ENCODE measurements at regions of chr10 and their contacts with region 1.

Region 1: DNA sequence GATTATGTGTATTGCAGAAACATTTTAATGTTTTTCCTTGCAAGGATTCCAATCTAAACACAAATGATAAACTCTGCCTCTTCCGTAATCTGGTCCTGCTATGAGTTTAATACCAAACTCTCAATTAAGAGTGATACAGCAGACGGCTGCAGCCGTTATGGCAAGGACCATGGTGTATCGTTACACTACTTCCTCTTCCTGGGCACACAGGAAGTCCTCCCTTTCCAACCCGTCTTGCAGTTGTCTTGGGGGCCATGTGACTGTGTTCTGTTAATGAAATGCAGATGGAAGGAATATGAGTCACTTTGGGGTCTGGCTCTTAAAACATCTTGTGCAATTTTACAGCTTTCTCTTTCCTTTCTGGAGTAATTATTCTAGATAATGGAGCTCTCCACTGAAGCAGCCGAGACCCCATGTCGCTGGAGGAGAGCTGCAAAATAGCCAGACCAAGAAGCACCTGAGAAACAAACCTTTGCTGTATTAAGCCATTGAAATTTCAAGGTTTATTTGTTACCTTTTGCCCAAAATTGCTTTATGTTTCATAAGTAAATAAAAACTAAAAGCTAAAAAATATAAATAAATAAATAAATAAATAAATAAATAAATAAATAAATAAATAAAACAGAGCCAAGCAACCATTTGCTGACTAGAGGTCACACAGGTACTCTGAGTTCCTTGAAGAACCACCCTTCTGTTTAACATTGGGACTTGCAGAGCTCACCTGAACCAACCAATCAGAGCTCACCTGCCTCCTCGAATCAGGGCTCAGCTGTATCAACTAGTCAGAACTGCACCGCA is 74.7 kb downstream of the FRMPD2 start:
- DNase-seq: no peak
- ATAC-seq: peak in 1 of 8 donors; percentile 72
- H3K4me3 ChIP-seq: no peak overlapping the region
- H3K27ac ChIP-seq: no peak overlapping the region
- H3K4me1 ChIP-seq: peaks cover 0 to 4% (median 0%) of the 10 kb centered on the region in 9 donors
- H3K27me3 ChIP-seq: peaks cover 0 to 16% (median 0%) of the 10 kb centered on the region in 7 donors
- CTCF ChIP-seq: no peak

Region 2: DNA sequence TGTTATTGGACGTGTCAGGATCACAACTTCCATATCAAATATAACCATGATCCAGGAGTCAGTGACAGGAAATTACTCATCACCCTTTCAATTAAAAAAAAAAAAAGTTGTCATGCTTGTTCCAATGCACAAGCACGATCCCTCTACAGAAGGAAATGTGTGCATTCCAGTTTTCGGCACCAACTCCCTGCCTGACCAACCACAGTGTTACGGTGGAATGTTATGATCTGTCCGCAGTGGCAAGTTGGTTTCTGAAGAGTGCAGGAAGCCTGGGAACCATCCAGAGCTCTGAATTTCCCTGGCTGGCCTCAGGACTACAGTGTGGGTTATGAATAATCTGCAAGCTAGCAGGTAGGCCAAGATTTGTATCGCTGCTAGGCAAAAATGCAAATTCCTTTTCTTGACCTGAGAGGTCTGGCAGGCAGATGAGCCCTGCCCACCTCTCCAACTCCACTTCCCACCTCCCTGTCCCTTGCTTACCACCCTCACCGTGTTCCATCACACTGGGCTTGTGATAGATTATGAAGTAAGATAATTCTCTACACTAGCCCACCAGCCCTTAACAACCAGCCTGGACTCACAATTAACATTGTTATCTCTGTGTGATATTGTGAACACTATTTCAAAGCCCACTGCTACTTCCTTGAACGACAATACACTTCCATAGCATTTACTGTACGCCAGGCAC is 54.3 kb after region 1 on chr10:
- intact Hi-C with region 1: loop called in 1 of 10 experiments (anchors 10 kb)
- DNase-seq: no peak
- ATAC-seq: peak in 5 of 8 donors; percentile 17 to 79 (median 44)
- H3K4me3 ChIP-seq: no peak overlapping the region
- H3K27ac ChIP-seq: peak overlapping the region in 1 of 10 donors; percentile 1
- H3K4me1 ChIP-seq: peaks cover 0 to 18% (median 9%) of the 10 kb centered on the region in 9 donors
- H3K27me3 ChIP-seq: no peaks in the 10 kb centered on the region
- CTCF ChIP-seq: no peak

Region 3: DNA sequence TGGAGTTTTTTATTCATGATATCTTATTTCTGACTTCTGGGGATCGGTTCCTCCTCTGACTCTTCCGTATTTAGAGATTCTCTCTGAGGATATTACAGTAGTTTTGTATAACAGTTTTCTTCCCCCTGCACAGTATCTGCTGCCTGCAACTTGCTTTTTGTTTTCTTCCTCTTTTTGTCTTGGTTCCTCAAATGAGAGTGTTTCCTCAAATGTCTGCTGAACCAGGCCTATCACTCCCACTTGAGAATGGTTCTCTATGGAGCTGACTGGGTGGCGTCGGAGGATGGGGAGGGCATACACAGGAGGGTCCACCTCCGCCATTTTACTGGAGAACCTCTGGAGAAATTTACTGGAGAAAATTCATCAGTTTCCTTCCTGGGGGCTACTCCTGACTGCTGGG is 377.4 kb after region 1 on chr10:
- intact Hi-C with region 1: no loop called
- DNase-seq: no peak
- ATAC-seq: peak; percentile 37 to 76 (median 50)
- H3K4me3 ChIP-seq: no peak overlapping the region
- H3K27ac ChIP-seq: peak overlapping the region in 2 of 10 donors; percentile 30 to 79
- H3K4me1 ChIP-seq: peaks cover 0 to 40% (median 13%) of the 10 kb centered on the region in 9 donors
- H3K27me3 ChIP-seq: no peaks in the 10 kb centered on the region
- CTCF ChIP-seq: no peak

Measured in heart right ventricle (tissue), 16 donors.